A549 (cell line): ENCODE measurements at regions of chr11 and their contacts with region 1.

Region 1: DNA sequence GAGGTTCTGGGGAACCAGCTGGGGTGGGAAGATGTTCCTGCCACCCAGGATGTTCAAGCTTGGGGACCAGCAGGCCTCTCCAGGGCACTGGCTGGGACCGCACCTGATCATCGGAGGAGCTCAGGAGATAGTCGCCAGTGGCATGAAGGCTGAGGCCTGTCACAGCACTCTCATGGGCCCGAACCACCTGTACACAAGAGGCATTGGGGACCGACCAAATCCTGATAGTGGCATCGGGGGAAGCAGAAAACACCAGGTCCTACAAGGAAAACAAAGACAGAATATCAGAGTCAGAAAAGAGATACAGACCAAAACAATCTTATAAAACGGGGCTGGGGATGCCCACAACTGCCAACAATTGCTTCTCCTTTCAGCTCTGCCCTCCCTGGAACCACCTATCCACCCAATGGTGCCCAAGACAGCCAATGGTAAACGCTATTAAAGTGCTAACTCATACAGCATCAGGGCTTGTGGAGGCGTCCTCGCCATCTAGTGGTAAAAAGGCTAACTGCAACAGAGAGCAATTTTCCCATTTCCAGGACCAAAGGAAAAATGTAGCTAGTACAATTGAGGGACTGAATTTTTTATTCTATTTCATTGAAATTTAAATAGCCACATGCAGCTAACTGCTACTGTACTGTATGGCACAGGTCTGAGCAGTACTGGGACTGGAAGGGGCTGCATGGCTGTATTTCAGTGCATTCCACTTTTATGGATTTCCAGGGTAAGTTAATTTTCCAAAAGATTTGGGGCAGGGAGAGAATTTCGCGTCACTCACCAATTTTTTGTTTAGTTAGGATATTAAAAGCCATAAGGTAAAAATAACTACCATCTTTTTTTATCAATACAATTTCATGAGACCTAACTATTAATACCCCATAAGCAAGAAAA is 7.1 kb downstream of the PRPF19 start:
- DNase-seq: peak; percentile 76 to 81
- ATAC-seq: peak; percentile 85 to 97
- H3K4me3 ChIP-seq: no peak overlapping the region
- H3K27ac ChIP-seq: peak overlapping the region; percentile 46 to 75; a peak in 5 of 6 replicates
- H3K4me1 ChIP-seq: peaks cover 7% of the 10 kb centered on the region; the same call in 2 of the 3 replicates
- CTCF ChIP-seq: peak; percentile 85
- EP300 ChIP-seq: no peak
- POLR2A ChIP-seq: no peak
- RAD21 ChIP-seq: peak; percentile 45 to 55

Region 2: GRCh38 chr11:60852129-60852981 is 46.9 kb before region 1 on chr11:
- CTCF ChIA-PET with region 1: interaction called, 17 read pairs
- POLR2A ChIA-PET with region 1: no interaction called
- DNase-seq: no peak
- ATAC-seq: no peak
- H3K4me3 ChIP-seq: no peak overlapping the region
- H3K27ac ChIP-seq: no peak overlapping the region
- H3K4me1 ChIP-seq: no peaks in the 10 kb centered on the region
- CTCF ChIP-seq: no peak
- EP300 ChIP-seq: no peak
- POLR2A ChIP-seq: no peak
- RAD21 ChIP-seq: no peak

Region 3: GRCh38 chr11:60872961-60873524 is 26.2 kb before region 1 on chr11:
- CTCF ChIA-PET with region 1: interaction called, 18 read pairs
- POLR2A ChIA-PET with region 1: no interaction called
- DNase-seq: no peak
- ATAC-seq: peak; percentile 16 to 37; a peak in 2 of 6 replicates
- H3K4me3 ChIP-seq: no peak overlapping the region
- H3K27ac ChIP-seq: peak overlapping the region in 1 of 2 experiments; percentile 75; a peak in 3 of 6 replicates
- H3K4me1 ChIP-seq: peaks cover 22% of the 10 kb centered on the region
- CTCF ChIP-seq: no peak
- EP300 ChIP-seq: no peak
- POLR2A ChIP-seq: no peak
- RAD21 ChIP-seq: no peak

Region 4: DNA sequence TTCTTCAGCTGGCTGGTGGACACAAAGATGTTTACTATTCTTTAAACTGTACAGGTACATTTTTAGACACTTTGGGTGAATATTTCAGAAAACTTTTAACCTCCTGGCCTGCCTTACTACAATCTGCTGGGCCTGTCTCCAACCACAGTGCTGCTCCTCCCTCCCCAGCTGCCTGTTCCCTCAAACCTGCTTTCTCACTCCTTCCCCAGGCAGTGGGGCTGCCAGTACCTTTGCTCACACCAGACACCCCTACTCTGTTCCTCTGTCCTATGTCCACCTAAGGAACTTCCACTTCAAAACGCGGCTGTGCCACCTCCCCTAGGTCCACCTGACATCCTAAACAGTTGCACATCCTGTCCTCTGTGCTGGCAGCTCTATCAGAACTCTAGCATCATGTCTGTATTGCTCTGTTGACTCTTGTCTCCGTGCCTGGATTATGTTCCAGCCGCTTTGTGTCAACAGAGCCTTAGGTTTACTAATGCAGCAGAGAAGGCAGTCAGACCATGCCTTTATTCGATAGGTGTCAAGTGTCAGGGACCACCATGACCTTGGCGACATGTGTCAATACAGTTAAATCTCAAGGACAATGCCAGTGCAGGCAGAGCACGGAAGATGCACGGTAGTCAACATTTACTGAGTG is 18.5 kb before region 1 on chr11:
- CTCF ChIA-PET with region 1: interaction called, 93 read pairs
- POLR2A ChIA-PET with region 1: no interaction called
- DNase-seq: no peak
- ATAC-seq: no peak
- H3K4me3 ChIP-seq: no peak overlapping the region
- H3K27ac ChIP-seq: no peak overlapping the region
- H3K4me1 ChIP-seq: no peaks in the 10 kb centered on the region
- CTCF ChIP-seq: no peak
- EP300 ChIP-seq: no peak
- POLR2A ChIP-seq: no peak
- RAD21 ChIP-seq: no peak

Region 5: GRCh38 chr11:60913793-60914632 is 14.7 kb after region 1 on chr11 and contains the start of gene TMEM109:
- CTCF ChIA-PET with region 1: interaction called, 22 read pairs
- POLR2A ChIA-PET with region 1: no interaction called
- DNase-seq: peak; percentile 87 to 94
- ATAC-seq: peak; percentile 79 to 89
- H3K4me3 ChIP-seq: peak within 1 kb of the TSS; percentile 76
- H3K27ac ChIP-seq: peak within 1 kb of the TSS; percentile 91 to 94
- H3K4me1 ChIP-seq: peaks cover 21% of the 10 kb centered on the region
- CTCF ChIP-seq: no peak
- EP300 ChIP-seq: no peak
- POLR2A ChIP-seq: peak; percentile 71
- RAD21 ChIP-seq: no peak
- polyA plus RNA-seq, gene TMEM109: 40.9 and 58.0 TPM in 2 replicates

Region 6: GRCh38 chr11:60925868-60926267 is 26.6 kb after region 1 on chr11:
- CTCF ChIA-PET with region 1: interaction called, 11 read pairs
- POLR2A ChIA-PET with region 1: no interaction called
- DNase-seq: peak; percentile 52 to 81
- ATAC-seq: peak; percentile 28 to 61; a peak in 5 of 6 replicates
- H3K4me3 ChIP-seq: no peak overlapping the region
- H3K27ac ChIP-seq: peak overlapping the region in 1 of 2 experiments; percentile 97; a peak in 3 of 6 replicates
- H3K4me1 ChIP-seq: peaks cover 20% of the 10 kb centered on the region
- CTCF ChIP-seq: 0 out of 3 replicates have a peak, but pooled peaks have one; percentile 6
- EP300 ChIP-seq: no peak
- POLR2A ChIP-seq: no peak
- RAD21 ChIP-seq: peak in 1 of 2 experiments; percentile 4; a peak in 1 of 5 replicates